Heart left ventricle (tissue), 16 donors: ENCODE measurements at regions of chr3 and their contacts with region 1.

Region 1: DNA sequence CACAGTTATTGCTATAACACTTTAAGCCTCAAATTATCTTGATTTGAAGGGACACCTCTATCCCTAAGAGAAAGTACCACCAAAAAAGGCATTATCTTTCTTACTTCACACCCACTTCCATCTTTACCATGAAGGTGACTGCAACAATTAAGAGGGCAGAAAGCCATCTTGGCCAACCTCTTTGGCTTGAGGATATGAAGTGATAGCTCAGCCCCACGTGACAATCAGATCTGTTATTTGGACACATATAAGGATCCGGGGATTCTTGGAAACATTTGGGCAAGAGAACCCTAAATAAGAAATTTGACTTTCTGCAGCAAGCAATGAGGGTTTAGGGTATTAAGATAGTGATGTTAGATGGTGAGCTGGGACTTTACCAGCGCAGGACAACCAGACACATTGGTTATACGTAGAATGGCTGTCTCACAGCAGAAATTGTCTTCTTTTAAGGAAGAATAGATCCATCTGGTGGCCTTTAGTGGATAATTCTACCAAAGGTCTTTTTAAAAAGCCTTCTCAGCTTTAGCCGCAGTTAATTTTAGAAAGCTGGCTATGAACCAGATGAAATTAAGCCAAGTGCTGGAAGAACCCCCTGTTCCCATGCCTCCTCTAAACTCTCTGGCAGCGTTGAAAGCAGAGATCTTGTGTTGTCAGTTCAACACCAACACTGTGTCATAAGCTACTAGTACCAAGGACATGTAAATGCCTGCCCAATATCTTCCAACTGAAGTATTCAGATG is 12.3 kb downstream of the HCLS1 start:
- DNase-seq: peak in 4 of 5 donors; percentile 41 to 68 (median 55)
- ATAC-seq: peak; percentile 98 to 99 (median 99)
- H3K4me3 ChIP-seq: no peak overlapping the region
- H3K27ac ChIP-seq: peak overlapping the region; percentile 39 to 88 (median 74)
- H3K4me1 ChIP-seq: peaks cover 0 to 20% (median 9%) of the 10 kb centered on the region in 12 donors
- H3K27me3 ChIP-seq: no peaks in the 10 kb centered on the region
- CTCF ChIP-seq: peak in 7 of 12 donors; percentile 8 to 45 (median 24)
- POLR2A ChIP-seq: no peak

Region 2: DNA sequence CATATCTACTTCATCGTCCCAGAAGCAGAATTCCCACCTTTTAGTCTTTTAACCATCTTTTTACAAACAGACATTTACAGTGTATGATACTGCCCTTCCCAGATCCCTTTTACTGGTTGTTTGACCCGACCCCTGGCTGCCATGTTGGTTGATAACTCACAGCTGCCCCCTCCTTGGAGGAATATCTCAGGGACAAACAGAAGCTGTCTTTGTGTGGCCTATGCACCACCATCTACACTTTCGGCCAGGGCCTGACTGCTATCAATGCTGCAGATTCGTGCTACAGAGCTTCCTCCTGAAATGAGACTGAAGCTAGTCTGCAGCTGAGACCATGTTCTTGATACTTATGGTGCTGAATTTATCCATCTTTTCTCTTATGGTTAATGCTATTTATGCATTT is 96.0 kb before region 1 on chr3:
- intact Hi-C with region 1: loop called in 7 of 10 experiments (anchors 2 to 10 kb)
- DNase-seq: no peak
- ATAC-seq: no peak
- H3K4me3 ChIP-seq: peak overlapping the region in 5 of 12 donors; percentile 13 to 25 (median 20)
- H3K27ac ChIP-seq: no peak overlapping the region
- H3K4me1 ChIP-seq: peaks cover 0 to 7% (median 0%) of the 10 kb centered on the region in 12 donors
- H3K27me3 ChIP-seq: no peaks in the 10 kb centered on the region
- CTCF ChIP-seq: no peak
- POLR2A ChIP-seq: no peak

Region 3: GRCh38 chr3:121592856-121593702 is 55.3 kb before region 1 on chr3 and contains the start of gene FBXO40:
- intact Hi-C with region 1: loop called in 4 of 10 experiments (anchors 2 to 10 kb)
- DNase-seq: peak in 4 of 5 donors; percentile 42 to 73 (median 64)
- ATAC-seq: peak; percentile 82 to 84 (median 82)
- H3K4me3 ChIP-seq: peak within 1 kb of the TSS; percentile 27 to 73 (median 51)
- H3K27ac ChIP-seq: peak within 1 kb of the TSS; percentile 66 to 95 (median 84)
- H3K4me1 ChIP-seq: peaks cover 0 to 19% (median 0%) of the 10 kb centered on the region in 12 donors
- H3K27me3 ChIP-seq: no peaks in the 10 kb centered on the region
- CTCF ChIP-seq: peak in 4 of 12 donors; percentile 11 to 36 (median 25)
- POLR2A ChIP-seq: peak in 1 of 2 donors; percentile 39
- total RNA-seq, gene FBXO40: 85.5 to 268 (median 192) TPM

Region 4: DNA sequence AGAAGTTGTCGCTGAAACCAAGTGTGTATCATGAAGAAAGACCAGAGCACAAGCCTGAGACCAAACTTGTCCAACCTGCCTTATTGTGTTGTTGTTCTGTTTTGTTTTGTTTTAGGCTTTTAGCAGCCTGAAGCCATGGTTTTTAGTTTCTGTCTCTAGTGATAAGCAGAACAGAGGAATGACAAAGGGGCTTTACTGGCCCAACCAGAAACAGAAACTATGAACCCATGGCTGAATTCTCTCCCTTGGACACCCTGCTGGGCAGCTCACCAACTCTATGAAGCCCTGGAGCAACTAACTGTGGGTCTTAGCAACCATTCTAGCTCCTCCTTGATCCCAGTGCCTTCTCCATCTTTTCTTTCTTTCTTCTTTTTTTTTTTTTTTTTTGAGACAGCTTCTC is 18.0 kb before region 1 on chr3:
- intact Hi-C with region 1: loop called in 1 of 10 experiments (anchors 2 kb)
- DNase-seq: no peak
- ATAC-seq: no peak
- H3K4me3 ChIP-seq: no peak overlapping the region
- H3K27ac ChIP-seq: peak overlapping the region in 5 of 12 donors; percentile 6 to 70 (median 62)
- H3K4me1 ChIP-seq: peaks cover 0 to 31% (median 7%) of the 10 kb centered on the region in 12 donors
- H3K27me3 ChIP-seq: no peaks in the 10 kb centered on the region
- CTCF ChIP-seq: no peak
- POLR2A ChIP-seq: no peak